ENCODE measurements at regions of chrX and their contacts with region 1.

Region 1: DNA sequence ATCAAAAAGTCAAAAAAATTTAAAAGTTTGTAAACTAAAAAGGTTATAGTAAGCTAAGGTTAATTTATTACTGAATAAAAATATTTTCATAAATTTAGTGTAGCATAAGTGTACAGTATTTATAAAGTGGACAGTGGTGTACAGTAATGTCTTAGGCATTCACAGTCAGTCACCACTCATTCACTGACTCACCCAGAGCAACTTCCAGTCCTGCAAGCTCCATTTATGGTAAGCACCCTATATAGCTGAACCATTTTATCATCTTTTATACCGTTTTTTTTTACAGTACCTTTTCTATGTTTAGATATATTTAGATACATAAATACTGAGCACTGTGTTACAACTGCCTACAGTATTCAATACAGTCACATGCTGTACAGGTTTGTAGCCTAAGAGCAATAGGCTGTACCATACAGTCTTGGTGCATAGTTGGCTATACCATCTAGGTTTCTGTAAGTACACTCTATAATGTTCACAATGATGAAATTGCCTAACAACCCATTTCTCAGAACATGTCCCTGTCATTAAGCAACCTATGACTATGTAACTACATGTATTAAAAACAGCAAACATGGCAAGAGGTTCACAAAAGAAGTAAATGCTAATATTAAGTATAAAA is 18.6 kb downstream of the ACSL4 start:
- DNase-seq: no peak
- ATAC-seq: peak; percentile 16; the same call in 2 of the 3 replicates
- H3K4me3 ChIP-seq: no peak overlapping the region
- H3K27ac ChIP-seq: no peak overlapping the region
- H3K4me1 ChIP-seq: peaks cover 3% of the 10 kb centered on the region
- H3K27me3 ChIP-seq: no peaks in the 10 kb centered on the region
- CTCF ChIP-seq: no peak
- EP300 ChIP-seq: no peak
- POLR2A ChIP-seq: no peak
- RAD21 ChIP-seq: no peak

Region 2: DNA sequence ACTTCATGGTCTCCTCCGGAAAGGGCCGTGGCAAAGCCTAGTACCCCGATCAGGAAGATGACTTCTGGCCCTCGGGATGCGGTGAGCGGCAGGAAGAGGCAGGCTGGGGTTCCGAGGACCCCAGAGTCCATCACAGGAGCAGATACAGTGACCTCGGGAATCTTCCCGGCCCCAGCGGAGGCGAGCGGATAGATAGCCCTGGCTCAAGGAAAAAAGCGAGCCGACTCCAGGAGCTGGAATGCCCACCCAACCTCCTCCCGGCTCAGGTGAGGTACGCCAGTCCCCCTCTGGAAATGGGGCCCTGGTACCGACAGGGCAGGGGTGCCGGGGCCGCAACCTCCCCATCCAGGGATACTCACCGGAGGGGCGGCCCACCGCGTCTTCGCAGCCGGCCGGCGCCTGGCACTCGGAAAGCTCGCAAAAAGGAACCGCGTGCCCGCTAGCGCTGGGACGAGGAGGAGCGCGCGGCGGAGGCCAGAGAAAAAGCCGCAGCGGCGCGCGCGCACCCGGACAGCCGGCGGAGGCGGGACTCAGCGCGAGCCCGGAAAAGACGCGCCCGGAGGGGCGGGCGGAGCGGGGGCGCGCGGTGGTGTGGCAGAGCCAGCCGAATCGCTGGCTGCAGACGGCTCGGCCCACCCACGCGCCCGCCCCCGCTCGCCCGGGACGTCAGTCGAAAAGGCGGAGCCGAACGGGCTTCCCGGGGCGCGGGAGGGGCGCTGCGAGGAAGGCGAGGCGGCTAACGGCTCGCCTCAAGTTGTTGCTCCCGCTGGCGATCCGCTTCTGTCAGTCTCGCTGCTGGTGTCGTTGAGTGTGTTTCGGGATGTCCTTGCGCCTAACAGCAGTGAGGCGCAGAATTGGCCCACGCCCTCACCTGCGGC is 18.6 kb after region 1 on chrX and contains the start of gene ACSL4:
- CTCF ChIA-PET with region 1: interaction called, 15 read pairs
- POLR2A ChIA-PET with region 1: interaction called, 8 read pairs
- RAD21 ChIA-PET with region 1: interaction called, 28 read pairs
- SMC1A ChIA-PET with region 1: interaction called, 25 read pairs
- in situ Hi-C with region 1: no loop called
- intact Hi-C with region 1: no loop called
- DNase-seq: no peak
- ATAC-seq: peak; percentile 91
- H3K4me3 ChIP-seq: peak within 1 kb of the TSS; percentile 69
- H3K27ac ChIP-seq: peak within 1 kb of the TSS; percentile 88
- H3K4me1 ChIP-seq: no peaks in the 10 kb centered on the region
- H3K27me3 ChIP-seq: no peaks in the 10 kb centered on the region
- CTCF ChIP-seq: no peak
- EP300 ChIP-seq: no peak
- POLR2A ChIP-seq: peak; percentile 84
- RAD21 ChIP-seq: no peak
- polyA plus RNA-seq, gene ACSL4: 20.7 to 23.6 TPM

Region 3: GRCh38 chrX:109782994-109783700 is 68.7 kb after region 1 on chrX:
- CTCF ChIA-PET with region 1: interaction called, 24 read pairs
- POLR2A ChIA-PET with region 1: no interaction called
- RAD21 ChIA-PET with region 1: interaction called, 13 read pairs
- SMC1A ChIA-PET with region 1: interaction called, 6 read pairs
- in situ Hi-C with region 1: no loop called
- intact Hi-C with region 1: no loop called
- DNase-seq: no peak
- ATAC-seq: peak; percentile 92
- H3K4me3 ChIP-seq: no peak overlapping the region
- H3K27ac ChIP-seq: peak overlapping the region; percentile 81
- H3K4me1 ChIP-seq: peaks cover 5% of the 10 kb centered on the region; the same call in 1 of the 2 replicates
- H3K27me3 ChIP-seq: no peaks in the 10 kb centered on the region
- CTCF ChIP-seq: no peak
- EP300 ChIP-seq: no peak
- POLR2A ChIP-seq: no peak
- RAD21 ChIP-seq: no peak

Region 4: DNA sequence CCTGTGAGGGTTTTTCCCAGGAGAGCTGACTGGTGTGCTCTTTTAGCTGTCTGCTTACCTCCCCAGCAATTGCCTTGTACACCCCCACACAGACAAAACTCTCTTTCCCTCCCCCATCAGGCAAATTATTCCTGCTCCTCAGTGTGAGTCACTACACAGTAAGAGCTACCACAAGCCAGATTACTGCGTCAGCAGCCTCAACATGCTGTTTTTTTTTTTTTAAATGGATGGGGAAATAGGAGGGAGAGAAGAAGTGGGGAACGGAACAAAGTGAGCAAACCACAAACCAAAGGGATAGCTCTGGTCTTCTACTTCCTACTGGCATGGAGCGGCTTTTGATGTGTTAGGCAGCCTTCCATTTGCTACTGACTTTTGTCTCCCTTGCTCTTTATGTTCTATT is 126.1 kb after region 1 on chrX:
- CTCF ChIA-PET with region 1: interaction called, 5 read pairs
- POLR2A ChIA-PET with region 1: interaction called, 3 read pairs
- RAD21 ChIA-PET with region 1: interaction called, 20 read pairs
- SMC1A ChIA-PET with region 1: interaction called, 17 read pairs
- in situ Hi-C with region 1: no loop called
- intact Hi-C with region 1: no loop called
- DNase-seq: no peak
- ATAC-seq: peak; percentile 36
- H3K4me3 ChIP-seq: no peak overlapping the region
- H3K27ac ChIP-seq: no peak overlapping the region
- H3K4me1 ChIP-seq: peaks cover 6% of the 10 kb centered on the region; the same call in 1 of the 2 replicates
- H3K27me3 ChIP-seq: no peaks in the 10 kb centered on the region
- CTCF ChIP-seq: no peak
- EP300 ChIP-seq: no peak
- POLR2A ChIP-seq: no peak
- RAD21 ChIP-seq: no peak

Region 5: DNA sequence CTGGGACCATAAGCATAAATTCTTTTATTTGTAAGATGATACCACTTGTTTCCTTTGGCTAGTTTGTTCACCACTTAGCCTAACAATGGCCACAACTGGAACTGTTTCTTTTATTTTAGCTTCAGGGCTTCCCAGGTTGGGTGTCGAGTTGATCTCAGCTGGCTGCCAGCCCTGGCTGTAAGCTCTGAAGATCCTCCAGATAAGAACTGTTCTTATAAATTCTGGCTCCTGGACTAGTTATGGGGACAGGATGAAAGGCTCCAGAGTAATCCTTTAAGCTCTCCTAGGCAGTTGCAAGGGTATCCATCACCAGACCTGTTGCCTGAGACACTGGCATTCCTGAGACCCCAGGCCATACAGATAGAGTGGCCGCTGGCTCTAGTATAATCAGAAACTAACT is 148.0 kb after region 1 on chrX:
- CTCF ChIA-PET with region 1: interaction called, 337 read pairs
- POLR2A ChIA-PET with region 1: interaction called, 3 read pairs
- RAD21 ChIA-PET with region 1: interaction called, 257 read pairs
- SMC1A ChIA-PET with region 1: interaction called, 403 read pairs
- in situ Hi-C with region 1: loop called (anchors 5 kb)
- intact Hi-C with region 1: loop called (anchors 1 kb)
- DNase-seq: no peak
- ATAC-seq: no peak
- H3K4me3 ChIP-seq: no peak overlapping the region
- H3K27ac ChIP-seq: no peak overlapping the region
- H3K4me1 ChIP-seq: no peaks in the 10 kb centered on the region
- H3K27me3 ChIP-seq: no peaks in the 10 kb centered on the region
- CTCF ChIP-seq: no peak
- EP300 ChIP-seq: no peak
- POLR2A ChIP-seq: no peak
- RAD21 ChIP-seq: no peak

Region 6: DNA sequence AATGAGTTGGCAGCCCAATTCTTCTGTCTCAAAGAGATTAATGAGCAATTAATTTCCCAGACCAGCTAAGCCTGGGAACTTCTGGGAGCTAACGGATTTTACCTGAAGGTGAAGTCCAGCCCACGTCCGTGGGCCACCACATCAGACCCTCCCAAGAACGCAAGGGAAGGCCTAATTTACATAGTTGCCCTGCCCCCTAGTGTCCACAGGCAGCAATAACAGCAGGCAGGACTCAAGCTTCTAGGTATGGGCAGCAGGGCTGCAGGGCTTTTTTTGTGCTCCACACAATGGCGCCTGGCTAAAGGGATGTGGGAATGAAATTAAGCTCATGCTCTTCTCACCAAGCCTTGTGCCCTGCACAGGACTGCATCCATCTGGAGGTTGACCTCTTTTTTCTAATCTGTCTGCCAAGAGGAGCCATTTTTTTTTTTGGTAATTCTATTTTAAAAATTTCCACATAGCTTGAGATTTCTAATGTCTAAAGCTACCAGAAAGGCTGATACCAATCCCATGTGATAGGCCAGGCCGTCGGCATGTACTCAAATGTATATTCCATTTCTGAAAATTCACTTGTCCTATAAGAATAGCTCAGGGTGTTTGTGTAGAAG is 176.6 kb after region 1 on chrX:
- CTCF ChIA-PET with region 1: interaction called, 202 read pairs
- POLR2A ChIA-PET with region 1: interaction called, 6 read pairs
- RAD21 ChIA-PET with region 1: interaction called, 72 read pairs
- SMC1A ChIA-PET with region 1: interaction called, 137 read pairs
- in situ Hi-C with region 1: no loop called
- intact Hi-C with region 1: loop called (anchors 1 kb)
- DNase-seq: no peak
- ATAC-seq: peak; percentile 77
- H3K4me3 ChIP-seq: no peak overlapping the region
- H3K27ac ChIP-seq: no peak overlapping the region
- H3K4me1 ChIP-seq: peaks cover 16% of the 10 kb centered on the region
- H3K27me3 ChIP-seq: no peaks in the 10 kb centered on the region
- CTCF ChIP-seq: peak; percentile 85 to 96 (median 94)
- EP300 ChIP-seq: no peak
- POLR2A ChIP-seq: no peak
- RAD21 ChIP-seq: peak; percentile 81

Region 7: GRCh38 chrX:109934434-109934833 is 220.0 kb after region 1 on chrX:
- CTCF ChIA-PET with region 1: no interaction called
- POLR2A ChIA-PET with region 1: no interaction called
- RAD21 ChIA-PET with region 1: no interaction called
- SMC1A ChIA-PET with region 1: no interaction called
- in situ Hi-C with region 1: no loop called
- intact Hi-C with region 1: no loop called
- DNase-seq: no peak
- ATAC-seq: no peak
- H3K4me3 ChIP-seq: no peak overlapping the region
- H3K27ac ChIP-seq: no peak overlapping the region
- H3K4me1 ChIP-seq: no peaks in the 10 kb centered on the region
- H3K27me3 ChIP-seq: no peaks in the 10 kb centered on the region; a peak in 1 of 4 replicates
- CTCF ChIP-seq: no peak
- EP300 ChIP-seq: no peak
- POLR2A ChIP-seq: no peak
- RAD21 ChIP-seq: no peak

Region 8: DNA sequence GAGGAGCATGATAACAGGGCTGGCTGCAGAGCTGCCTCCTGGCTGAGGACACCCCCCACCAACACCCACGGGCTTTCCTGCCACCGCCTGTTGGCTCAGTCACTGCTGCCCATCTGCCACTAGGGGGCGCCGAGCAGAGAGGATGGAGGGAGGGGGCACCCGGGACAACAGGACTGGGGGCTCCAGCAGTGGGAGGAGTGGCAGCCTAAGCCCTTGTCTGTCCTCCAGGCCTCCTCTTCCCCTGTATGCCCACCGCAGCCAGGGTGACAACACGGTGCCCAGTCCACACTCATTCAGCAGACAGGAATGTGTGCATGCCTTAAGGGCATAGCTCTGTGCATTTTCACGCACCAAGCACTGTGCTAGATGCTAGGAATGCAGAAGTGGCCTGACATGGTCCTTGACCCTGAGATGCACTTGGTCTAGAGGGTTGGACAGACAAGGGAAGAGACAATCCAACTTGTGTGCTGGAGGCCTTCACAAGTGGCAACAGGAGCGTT is 453.6 kb after region 1 on chrX:
- CTCF ChIA-PET with region 1: no interaction called
- POLR2A ChIA-PET with region 1: no interaction called
- RAD21 ChIA-PET with region 1: no interaction called
- SMC1A ChIA-PET with region 1: no interaction called
- in situ Hi-C with region 1: no loop called
- intact Hi-C with region 1: no loop called
- DNase-seq: no peak
- ATAC-seq: peak; percentile 73
- H3K4me3 ChIP-seq: no peak overlapping the region
- H3K27ac ChIP-seq: no peak overlapping the region
- H3K4me1 ChIP-seq: peaks cover 10% of the 10 kb centered on the region
- H3K27me3 ChIP-seq: no peaks in the 10 kb centered on the region
- CTCF ChIP-seq: peak; percentile 52 to 75 (median 67)
- EP300 ChIP-seq: no peak
- POLR2A ChIP-seq: no peak
- RAD21 ChIP-seq: peak; percentile 52

Measured in GM12878 (cell line).